Activated T-helper 2 cell treated with anti-CD3 and anti-CD28 coated beads, Interferon-gamma antibody, Interleukin-2, Interleukin-4, amounts not matched to agents 10 μg/mL and 5 μg/mL and 100 μg/mL, durations not matched to agents 14 hours and 24 hours and 36 hours (primary cell): ENCODE measurements at regions of chr16 and their contacts with region 1.

Region 1: GRCh38 chr16:66872943-66873684 is 7.2 kb upstream of the PDP2 start:
- DNase-seq: peak; percentile 93
- H3K4me3 Mint-ChIP-seq: peak overlapping the region; percentile 82
- H3K27ac Mint-ChIP-seq: peak overlapping the region; percentile 92
- H3K4me1 Mint-ChIP-seq: peaks cover 43% of the 10 kb centered on the region
- H3K27me3 Mint-ChIP-seq: no peaks in the 10 kb centered on the region

Region 2: DNA sequence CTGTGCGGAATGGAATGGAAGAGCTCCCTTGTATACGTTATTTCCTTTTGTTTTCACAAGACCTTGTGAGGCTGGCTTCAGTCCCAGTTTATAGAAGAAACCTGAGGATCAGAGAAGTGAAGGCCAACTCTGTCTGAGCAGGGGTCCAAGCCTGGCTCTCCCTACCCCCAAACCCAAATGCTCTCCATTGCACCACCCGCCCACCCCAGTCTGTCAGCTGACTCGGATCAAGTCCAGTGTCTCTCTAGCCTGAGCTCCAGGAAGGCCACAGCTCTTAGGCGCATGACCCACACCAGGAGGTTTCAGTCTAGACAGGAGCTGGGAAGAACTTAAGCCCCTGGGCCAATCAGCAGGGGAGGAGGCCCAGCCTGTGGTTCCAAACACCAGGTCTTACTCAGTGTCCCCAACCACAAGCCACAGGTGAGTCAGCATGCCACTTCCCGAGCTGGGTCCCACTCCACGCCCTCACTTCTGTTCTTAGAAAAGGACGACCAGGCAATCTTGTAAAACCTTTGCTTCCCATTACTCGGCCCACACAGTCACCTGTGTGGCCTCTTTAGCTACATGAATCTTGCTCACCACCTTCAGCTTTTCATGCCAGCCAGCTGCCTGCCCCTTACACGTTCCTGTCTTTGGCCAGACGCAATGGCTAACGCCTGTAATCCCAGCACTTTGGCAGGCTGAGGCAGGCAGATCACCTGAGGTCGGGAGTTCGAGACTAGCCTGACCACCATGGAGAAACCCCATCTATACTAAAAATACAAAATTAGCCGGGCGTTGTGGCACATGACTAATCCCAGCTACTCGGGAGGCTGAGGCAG is 351.0 kb before region 1 on chr16:
- intact Hi-C with region 1: loop called (anchors 10 kb)
- DNase-seq: peak; percentile 83
- H3K4me3 Mint-ChIP-seq: peak overlapping the region; percentile 49
- H3K27ac Mint-ChIP-seq: peak overlapping the region; percentile 85
- H3K4me1 Mint-ChIP-seq: peaks cover 74% of the 10 kb centered on the region
- H3K27me3 Mint-ChIP-seq: no peaks in the 10 kb centered on the region

Region 3: GRCh38 chr16:66728117-66728787 is 144.9 kb before region 1 on chr16:
- intact Hi-C with region 1: loop called (anchors 5 kb)
- DNase-seq: no peak
- H3K4me3 Mint-ChIP-seq: no peak overlapping the region
- H3K27ac Mint-ChIP-seq: peak overlapping the region; percentile 15
- H3K4me1 Mint-ChIP-seq: peaks cover 1% of the 10 kb centered on the region
- H3K27me3 Mint-ChIP-seq: no peaks in the 10 kb centered on the region

Region 4: DNA sequence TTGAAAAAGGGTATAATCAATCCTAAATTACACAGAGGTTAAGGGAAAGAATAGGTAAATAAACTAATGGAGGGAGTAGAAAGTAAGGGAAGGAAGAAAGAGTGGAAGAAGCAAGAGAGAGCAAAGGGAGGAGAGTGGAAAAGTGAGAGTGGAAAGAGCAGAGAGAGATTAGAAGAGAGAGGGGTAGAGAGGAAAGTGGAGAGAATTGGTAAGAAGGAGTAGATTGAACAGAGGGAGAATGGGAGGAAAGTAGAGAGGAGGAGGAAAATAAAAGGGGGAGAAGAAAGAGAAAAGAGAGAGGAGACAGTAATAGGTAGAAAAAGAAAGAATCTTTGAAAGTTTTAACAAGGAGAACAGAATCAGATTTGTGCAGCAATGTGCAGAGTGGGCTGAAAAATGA is 96.7 kb before region 1 on chr16:
- intact Hi-C with region 1: no loop called
- DNase-seq: no peak
- H3K4me3 Mint-ChIP-seq: no peak overlapping the region
- H3K27ac Mint-ChIP-seq: no peak overlapping the region
- H3K4me1 Mint-ChIP-seq: no peaks in the 10 kb centered on the region
- H3K27me3 Mint-ChIP-seq: no peaks in the 10 kb centered on the region

Region 5: DNA sequence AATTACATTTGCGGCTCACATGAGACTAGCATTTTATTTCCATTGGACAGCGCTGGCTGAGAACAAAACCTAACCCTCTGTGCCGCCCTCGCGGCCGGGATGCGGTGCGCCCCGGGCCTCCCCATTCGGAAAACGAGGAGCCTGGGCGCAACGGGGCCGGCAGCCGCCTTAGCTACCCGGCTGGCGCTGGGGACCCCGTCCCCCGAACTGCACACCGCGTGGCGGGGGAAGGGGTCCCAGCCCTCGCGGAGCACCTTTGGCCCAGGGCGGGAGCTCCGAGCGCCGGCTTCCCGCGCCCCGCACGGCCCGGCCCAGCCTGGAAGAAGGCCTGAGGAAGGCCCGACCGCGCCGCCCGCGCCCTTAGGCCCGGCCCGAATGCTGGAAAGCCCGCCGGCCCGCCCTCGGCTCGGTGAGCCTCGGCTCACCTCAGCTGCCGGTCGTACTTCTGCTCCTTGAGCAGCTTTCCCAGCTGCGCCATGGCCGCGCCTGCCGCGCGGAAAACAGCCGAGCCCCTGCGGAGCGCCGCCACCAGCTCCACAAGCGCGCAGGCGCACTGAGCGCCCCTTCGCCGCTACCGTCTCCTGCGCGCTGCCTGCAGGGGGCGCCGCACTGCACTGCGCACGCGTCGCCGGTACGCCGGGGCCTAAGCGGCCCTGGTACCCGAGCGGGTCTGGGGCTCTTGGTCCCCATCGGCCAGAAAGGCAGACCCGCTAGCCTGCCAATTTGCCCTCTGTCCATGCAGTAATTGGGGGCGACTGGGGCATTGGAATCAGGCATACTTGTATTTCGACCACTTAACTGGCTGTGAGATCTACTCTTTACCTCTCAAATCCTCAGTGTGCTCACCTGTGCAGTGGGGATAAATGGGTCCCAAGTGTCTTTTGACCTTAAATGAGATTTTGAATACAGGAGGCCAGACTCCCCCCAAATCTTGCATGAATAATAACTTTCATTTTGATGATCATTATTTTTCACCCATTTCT is 42.4 kb before region 1 on chr16 and contains the start of gene NAE1:
- intact Hi-C with region 1: loop called (anchors 1 kb)
- DNase-seq: peak; percentile 89
- H3K4me3 Mint-ChIP-seq: peak within 1 kb of the TSS; percentile 75
- H3K27ac Mint-ChIP-seq: peak within 1 kb of the TSS; percentile 69
- H3K4me1 Mint-ChIP-seq: peaks cover 27% of the 10 kb centered on the region
- H3K27me3 Mint-ChIP-seq: no peaks in the 10 kb centered on the region
- total RNA-seq, gene NAE1: 123 and 125 TPM in 2 replicates